Testis (tissue), 5 donors: ENCODE measurements at regions of chr3 and their contacts with region 1.

Region 1: GRCh38 chr3:98817547-98818041 is 54.5 kb downstream of the ST3GAL6 start:
- DNase-seq: no peak
- H3K4me3 ChIP-seq: no peak overlapping the region
- H3K27ac ChIP-seq: no peak overlapping the region
- H3K4me1 ChIP-seq: no peaks in the 10 kb centered on the region
- H3K27me3 ChIP-seq: no peaks in the 10 kb centered on the region
- CTCF ChIP-seq: peak; percentile 56 to 87 (median 83)
- POLR2A ChIP-seq: no peak

Region 2: GRCh38 chr3:98593046-98593936 is 224.3 kb before region 1 on chr3 and contains the start of gene CPOX:
- intact Hi-C with region 1: loop called (anchors 10 kb)
- DNase-seq: peak; percentile 91
- H3K4me3 ChIP-seq: peak within 1 kb of the TSS; percentile 73 to 81
- H3K27ac ChIP-seq: peak within 1 kb of the TSS; percentile 80 to 86
- H3K4me1 ChIP-seq: peaks cover 4% of the 10 kb centered on the region
- H3K27me3 ChIP-seq: no peaks in the 10 kb centered on the region
- CTCF ChIP-seq: no peak
- POLR2A ChIP-seq: no peak
- total RNA-seq, gene CPOX: 21.7 to 25.4 TPM

Region 3: DNA sequence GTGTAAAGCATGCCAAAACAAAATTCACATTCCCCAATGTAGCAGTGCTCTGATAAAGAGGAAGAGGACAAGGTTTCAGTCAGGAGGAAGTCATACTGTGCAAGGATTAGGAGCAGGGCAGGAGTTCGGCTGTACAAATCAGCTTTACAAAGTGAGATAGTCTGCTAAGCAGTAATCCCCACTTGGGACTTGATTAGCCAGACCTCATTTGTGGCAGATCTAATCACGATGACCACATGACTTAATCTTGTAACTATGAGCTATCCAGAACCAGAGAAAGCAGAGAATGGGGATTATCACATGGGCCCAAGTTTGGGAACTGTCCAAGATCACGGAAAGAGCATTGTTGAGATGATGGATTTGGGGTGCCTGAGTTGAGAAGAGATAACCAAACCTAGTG is 76.1 kb after region 1 on chr3:
- intact Hi-C with region 1: no loop called
- DNase-seq: no peak
- H3K4me3 ChIP-seq: no peak overlapping the region
- H3K27ac ChIP-seq: no peak overlapping the region
- H3K4me1 ChIP-seq: peaks cover 25% of the 10 kb centered on the region
- H3K27me3 ChIP-seq: no peaks in the 10 kb centered on the region
- CTCF ChIP-seq: no peak
- POLR2A ChIP-seq: no peak

Region 4: GRCh38 chr3:98986073-98986472 is 168.5 kb after region 1 on chr3:
- intact Hi-C with region 1: no loop called
- DNase-seq: peak; percentile 36
- H3K4me3 ChIP-seq: no peak overlapping the region
- H3K27ac ChIP-seq: peak overlapping the region in 1 of 2 donors; percentile 3
- H3K4me1 ChIP-seq: peaks cover 8% of the 10 kb centered on the region
- H3K27me3 ChIP-seq: no peaks in the 10 kb centered on the region
- CTCF ChIP-seq: no peak
- POLR2A ChIP-seq: no peak

Region 5: GRCh38 chr3:98999675-99000074 is 182.1 kb after region 1 on chr3:
- intact Hi-C with region 1: loop called (anchors 5 kb)
- DNase-seq: no peak
- H3K4me3 ChIP-seq: no peak overlapping the region
- H3K27ac ChIP-seq: no peak overlapping the region
- H3K4me1 ChIP-seq: no peaks in the 10 kb centered on the region
- H3K27me3 ChIP-seq: no peaks in the 10 kb centered on the region
- CTCF ChIP-seq: no peak
- POLR2A ChIP-seq: no peak

Region 6: DNA sequence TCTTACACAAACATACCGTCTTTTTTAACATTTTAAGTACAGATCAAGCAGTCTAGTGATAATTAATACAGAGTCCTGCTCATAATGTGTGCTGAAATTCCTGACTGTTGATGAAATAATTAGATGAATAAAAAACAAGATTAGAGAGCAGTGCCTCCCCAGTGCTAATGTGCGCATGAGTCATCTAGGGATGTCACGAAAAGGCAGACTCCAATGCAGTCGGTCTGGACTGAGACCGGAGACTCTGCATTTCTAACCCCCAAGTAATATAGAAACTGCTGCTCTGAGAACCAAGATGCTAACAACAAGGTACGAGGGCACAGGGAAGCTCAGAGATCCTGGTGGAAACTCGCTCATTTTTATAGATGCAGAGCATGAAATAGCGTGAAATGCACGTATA is 882.2 kb after region 1 on chr3:
- intact Hi-C with region 1: loop called (anchors 10 kb)
- DNase-seq: no peak
- H3K4me3 ChIP-seq: no peak overlapping the region
- H3K27ac ChIP-seq: no peak overlapping the region
- H3K4me1 ChIP-seq: no peaks in the 10 kb centered on the region
- H3K27me3 ChIP-seq: no peaks in the 10 kb centered on the region
- CTCF ChIP-seq: no peak
- POLR2A ChIP-seq: no peak